ENCODE measurements at regions of chr1 and their contacts with region 1.

Region 1: GRCh38 chr1:155063550-155064110 is at the start of gene EFNA4:
- DNase-seq: peak; percentile 93 to 94
- H3K4me3 ChIP-seq: peak within 1 kb of the TSS; percentile 87
- H3K4me1 ChIP-seq: peaks cover 11% of the 10 kb centered on the region
- H3K27me3 ChIP-seq: no peaks in the 10 kb centered on the region

Region 2: DNA sequence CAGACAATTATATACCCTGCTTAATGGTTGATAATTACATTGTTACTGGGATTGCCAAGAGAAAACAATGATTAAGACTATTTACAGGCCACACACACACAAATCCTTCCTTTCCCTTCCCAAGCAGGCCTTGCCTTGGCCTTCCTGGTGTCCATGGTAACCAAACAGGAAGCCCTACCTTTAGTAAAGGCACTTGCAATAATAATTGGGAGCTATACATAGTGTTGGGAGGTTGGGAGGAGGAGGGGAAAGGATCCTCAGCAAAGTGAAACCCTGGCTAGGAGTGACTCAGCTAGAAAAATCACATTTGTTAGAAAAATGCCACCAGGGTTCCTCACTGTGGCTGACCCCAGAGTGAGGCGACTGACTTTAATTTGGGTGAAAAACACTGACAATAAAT is 333.4 kb before region 1 on chr1:
- in situ Hi-C with region 1: no loop called
- DNase-seq: peak; percentile 54 to 69
- H3K4me3 ChIP-seq: no peak overlapping the region
- H3K4me1 ChIP-seq: peaks cover 5% of the 10 kb centered on the region
- H3K27me3 ChIP-seq: no peaks in the 10 kb centered on the region

Region 3: GRCh38 chr1:154896771-154897391 is 166.7 kb before region 1 on chr1:
- in situ Hi-C with region 1: no loop called
- DNase-seq: no peak
- H3K4me3 ChIP-seq: no peak overlapping the region
- H3K4me1 ChIP-seq: no peaks in the 10 kb centered on the region
- H3K27me3 ChIP-seq: no peaks in the 10 kb centered on the region; the same call in 1 of the 2 replicates

Region 4: GRCh38 chr1:154998818-154999570 is 64.6 kb before region 1 on chr1:
- in situ Hi-C with region 1: loop called (anchors 5 kb)
- DNase-seq: peak; percentile 73 to 91
- H3K4me3 ChIP-seq: peak overlapping the region; percentile 77
- H3K4me1 ChIP-seq: peaks cover 17% of the 10 kb centered on the region
- H3K27me3 ChIP-seq: no peaks in the 10 kb centered on the region

Region 5: GRCh38 chr1:155934097-155934935 is 870.7 kb after region 1 on chr1 and contains the start of gene KHDC4:
- in situ Hi-C with region 1: no loop called
- DNase-seq: peak; percentile 96 to 99
- H3K4me3 ChIP-seq: peak within 1 kb of the TSS; percentile 86
- H3K4me1 ChIP-seq: peaks cover 21% of the 10 kb centered on the region
- H3K27me3 ChIP-seq: no peaks in the 10 kb centered on the region

Measured in HAP-1 (cell line).